B cell (primary cell): ENCODE measurements at regions of chr6 and their contacts with region 1.

Region 1: DNA sequence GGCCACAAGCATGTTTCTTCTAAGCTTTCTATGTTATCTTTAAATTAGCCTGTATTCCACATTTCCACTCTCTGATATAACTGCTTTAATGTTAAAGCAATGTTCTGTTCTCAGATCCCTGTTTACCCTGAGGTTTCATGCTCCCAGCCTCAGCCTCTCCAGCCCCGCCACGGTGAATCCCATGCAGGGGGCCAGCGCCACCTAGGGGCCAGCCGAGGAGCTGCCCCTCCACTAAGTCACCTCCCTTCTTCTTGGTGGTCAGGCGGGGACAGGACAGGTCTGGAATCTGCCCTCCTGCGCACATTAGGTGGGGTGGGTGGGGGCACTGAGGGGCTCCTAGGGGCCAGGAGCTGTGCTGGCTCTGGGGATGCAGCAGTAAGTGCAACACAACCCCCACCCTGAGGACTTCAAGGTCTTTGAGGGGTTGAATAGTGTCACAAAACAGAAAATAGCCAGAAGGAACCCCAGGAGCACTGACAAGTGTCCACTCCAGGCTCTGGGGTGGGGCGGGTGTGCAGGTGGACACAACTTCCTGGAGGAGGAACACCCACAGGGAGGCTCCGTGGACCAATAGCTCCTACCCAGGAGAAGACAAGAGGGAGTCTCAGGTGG is 61.6 kb downstream of the RAB44 start:
- DNase-seq: peak; percentile 88
- ATAC-seq: peak; percentile 55
- H3K4me3 ChIP-seq: no peak overlapping the region
- H3K4me3 Mint-ChIP-seq: peak overlapping the region; percentile 66
- H3K27ac ChIP-seq: peak overlapping the region; percentile 32 to 95
- H3K27ac Mint-ChIP-seq: peak overlapping the region; percentile 85
- H3K4me1 ChIP-seq: peaks cover 48 to 61% of the 10 kb centered on the region in 2 donors
- H3K4me1 Mint-ChIP-seq: peaks cover 56% of the 10 kb centered on the region
- H3K27me3 ChIP-seq: no peaks in the 10 kb centered on the region
- H3K27me3 Mint-ChIP-seq: no peaks in the 10 kb centered on the region
- CTCF ChIP-seq: peak; percentile 96

Region 2: DNA sequence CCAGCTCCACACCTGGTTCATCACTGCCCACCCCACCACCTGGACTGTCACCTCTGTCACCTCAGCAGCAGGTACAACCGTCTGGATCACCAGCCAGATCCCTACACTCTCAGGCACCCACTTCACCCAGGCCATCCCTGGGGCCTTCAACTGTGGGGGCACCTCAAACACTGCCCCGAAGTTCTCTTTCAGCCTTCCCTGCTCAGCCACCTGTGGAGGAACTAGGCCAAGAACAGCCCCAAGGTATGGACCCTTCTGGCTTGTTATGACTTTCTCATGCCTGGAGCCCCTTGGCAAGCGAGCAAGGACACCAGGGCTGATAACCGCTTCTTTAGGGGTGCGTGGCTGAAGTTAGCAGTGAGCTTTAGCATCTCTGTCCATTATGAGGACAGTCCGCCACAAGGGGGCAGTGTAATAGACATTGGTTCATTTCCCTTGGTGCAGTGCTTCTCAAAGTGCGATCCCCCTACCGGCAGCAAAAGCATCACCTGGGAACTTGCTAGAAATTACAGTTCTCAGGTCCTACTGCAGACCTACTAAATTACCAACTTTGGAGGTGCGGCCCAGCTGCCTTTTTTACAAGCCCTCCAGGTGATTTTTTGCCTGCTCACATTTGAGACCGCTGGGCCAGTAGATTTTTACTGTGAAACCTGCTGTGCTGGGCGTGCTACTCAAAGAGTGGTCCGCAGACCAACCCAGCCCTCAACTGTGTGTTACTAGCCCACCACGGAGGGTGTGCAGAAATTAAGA is 456.9 kb before region 1 on chr6:
- CTCF ChIA-PET with region 1: interaction called, 6 read pairs
- POLR2A ChIA-PET with region 1: no interaction called
- intact Hi-C with region 1: loop called (anchors 2 kb)
- DNase-seq: peak; percentile 94
- ATAC-seq: peak; percentile 95
- H3K4me3 ChIP-seq: no peak overlapping the region
- H3K4me3 Mint-ChIP-seq: no peak overlapping the region
- H3K27ac ChIP-seq: no peak overlapping the region
- H3K27ac Mint-ChIP-seq: peak overlapping the region; percentile 57
- H3K4me1 ChIP-seq: no peaks in the 10 kb centered on the region
- H3K4me1 Mint-ChIP-seq: peaks cover 5% of the 10 kb centered on the region
- H3K27me3 ChIP-seq: peaks cover 0 to 6% (median 1%) of the 10 kb centered on the region in 4 experiments
- H3K27me3 Mint-ChIP-seq: peaks cover 23% of the 10 kb centered on the region
- CTCF ChIP-seq: peak; percentile 97

Region 3: GRCh38 chr6:36546920-36547645 is 212.2 kb before region 1 on chr6 and contains the start of gene STK38:
- CTCF ChIA-PET with region 1: interaction called, 3 read pairs
- POLR2A ChIA-PET with region 1: no interaction called
- intact Hi-C with region 1: loop called (anchors 5 kb)
- DNase-seq: peak; percentile 95
- ATAC-seq: peak; percentile 85
- H3K4me3 ChIP-seq: peak within 1 kb of the TSS; percentile 70 to 96 (median 88)
- H3K4me3 Mint-ChIP-seq: peak within 1 kb of the TSS; percentile 94
- H3K27ac ChIP-seq: peak within 1 kb of the TSS; percentile 87 to 92
- H3K27ac Mint-ChIP-seq: peak within 1 kb of the TSS; percentile 91
- H3K4me1 ChIP-seq: peaks cover 52 to 60% of the 10 kb centered on the region in 2 donors
- H3K4me1 Mint-ChIP-seq: peaks cover 59% of the 10 kb centered on the region
- H3K27me3 ChIP-seq: no peaks in the 10 kb centered on the region
- H3K27me3 Mint-ChIP-seq: no peaks in the 10 kb centered on the region
- CTCF ChIP-seq: no peak
- total RNA-seq, gene STK38: 67.4 and 71.8 TPM in 2 replicates

Region 4: GRCh38 chr6:36623547-36624459 is 135.5 kb before region 1 on chr6:
- CTCF ChIA-PET with region 1: interaction called, 215 read pairs
- POLR2A ChIA-PET with region 1: interaction called, 6 read pairs
- intact Hi-C with region 1: loop called (anchors 1 kb)
- DNase-seq: peak; percentile 87
- ATAC-seq: peak; percentile 93
- H3K4me3 ChIP-seq: no peak overlapping the region
- H3K4me3 Mint-ChIP-seq: peak overlapping the region; percentile 55
- H3K27ac ChIP-seq: no peak overlapping the region
- H3K27ac Mint-ChIP-seq: peak overlapping the region; percentile 79
- H3K4me1 ChIP-seq: peaks cover 21 to 33% of the 10 kb centered on the region in 2 donors
- H3K4me1 Mint-ChIP-seq: peaks cover 34% of the 10 kb centered on the region
- H3K27me3 ChIP-seq: no peaks in the 10 kb centered on the region
- H3K27me3 Mint-ChIP-seq: no peaks in the 10 kb centered on the region
- CTCF ChIP-seq: peak; percentile 92

Region 5: GRCh38 chr6:36735110-36736071 is 23.9 kb before region 1 on chr6:
- CTCF ChIA-PET with region 1: interaction called, 27 read pairs
- POLR2A ChIA-PET with region 1: interaction called, 3 read pairs
- intact Hi-C with region 1: no loop called
- DNase-seq: peak; percentile 74
- ATAC-seq: peak; percentile 86
- H3K4me3 ChIP-seq: peak overlapping the region in 4 of 5 experiments; percentile 2 to 44 (median 22)
- H3K4me3 Mint-ChIP-seq: peak overlapping the region; percentile 75
- H3K27ac ChIP-seq: no peak overlapping the region
- H3K27ac Mint-ChIP-seq: peak overlapping the region; percentile 80
- H3K4me1 ChIP-seq: peaks cover 31 to 54% of the 10 kb centered on the region in 2 donors
- H3K4me1 Mint-ChIP-seq: peaks cover 42% of the 10 kb centered on the region
- H3K27me3 ChIP-seq: no peaks in the 10 kb centered on the region
- H3K27me3 Mint-ChIP-seq: no peaks in the 10 kb centered on the region
- CTCF ChIP-seq: peak; percentile 49

Region 6: DNA sequence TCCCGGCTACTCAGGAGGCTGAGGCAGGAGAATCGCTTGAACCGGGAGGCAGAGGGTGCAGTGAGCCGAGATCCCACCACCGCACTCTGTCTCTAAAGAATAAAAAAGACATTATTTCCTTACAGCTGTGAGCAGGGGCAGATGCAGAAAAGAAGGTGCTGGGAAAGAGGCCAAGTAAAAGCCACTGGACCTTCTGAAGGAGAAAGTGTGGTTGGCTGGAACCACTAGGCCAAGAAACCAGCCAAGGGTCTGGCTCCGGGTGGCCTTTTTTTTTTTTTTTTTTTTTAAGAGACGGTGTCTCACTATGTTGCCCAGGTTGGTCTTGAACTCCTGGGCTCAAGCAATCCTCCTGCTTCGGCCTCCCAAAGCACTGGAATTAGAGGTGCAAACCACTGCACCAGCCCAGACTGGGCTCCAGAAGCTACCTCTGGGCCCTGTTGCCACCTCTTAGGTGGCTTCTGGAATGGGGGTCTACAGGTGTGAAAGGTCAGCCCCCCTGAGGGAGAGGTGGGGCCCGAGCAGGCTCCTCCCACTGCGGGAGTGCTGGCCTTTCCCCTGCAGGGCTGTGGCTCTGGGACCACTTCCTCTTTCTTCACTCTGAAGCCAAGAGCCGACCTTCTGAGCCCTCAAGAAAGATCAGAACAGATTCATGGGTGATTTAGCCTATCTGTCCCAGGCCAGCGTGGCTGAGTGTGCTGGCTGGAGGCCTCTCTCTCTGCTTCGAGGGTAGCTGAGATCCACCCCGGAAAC is 246.0 kb after region 1 on chr6 and contains the start of gene FGD2:
- CTCF ChIA-PET with region 1: interaction called, 9 read pairs
- POLR2A ChIA-PET with region 1: interaction called, 5 read pairs
- intact Hi-C with region 1: loop called (anchors 5 kb)
- DNase-seq: peak; percentile 89
- ATAC-seq: peak; percentile 72
- H3K4me3 ChIP-seq: peak within 1 kb of the TSS; percentile 82 to 97 (median 89)
- H3K4me3 Mint-ChIP-seq: peak within 1 kb of the TSS; percentile 96
- H3K27ac ChIP-seq: peak within 1 kb of the TSS; percentile 80 to 92
- H3K27ac Mint-ChIP-seq: peak within 1 kb of the TSS; percentile 95
- H3K4me1 ChIP-seq: peaks cover 56 to 79% of the 10 kb centered on the region in 2 donors
- H3K4me1 Mint-ChIP-seq: peaks cover 82% of the 10 kb centered on the region
- H3K27me3 ChIP-seq: no peaks in the 10 kb centered on the region
- H3K27me3 Mint-ChIP-seq: no peaks in the 10 kb centered on the region
- CTCF ChIP-seq: no peak
- total RNA-seq, gene FGD2: 352 and 360 TPM in 2 replicates